ENCODE measurements at regions of chr3 and their contacts with region 1.

Region 1: DNA sequence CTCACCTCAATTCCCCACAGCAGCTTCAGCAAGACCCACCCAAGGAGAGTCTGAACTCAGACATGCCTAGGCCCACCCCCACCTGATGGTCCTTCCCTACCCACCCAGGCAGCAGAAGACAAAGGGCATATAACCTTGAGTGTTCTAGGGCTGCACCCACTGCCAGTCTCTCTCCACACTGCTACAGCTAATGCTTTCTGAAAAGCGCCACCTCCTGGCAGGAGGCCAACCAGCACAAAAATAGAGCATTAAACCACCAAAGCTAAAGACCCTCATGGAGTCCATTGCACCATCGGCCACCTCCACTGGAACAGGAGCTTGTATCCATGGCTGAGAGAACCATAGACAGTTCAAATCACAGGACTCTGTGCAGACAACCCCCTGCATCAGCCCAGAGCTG is 11.3 kb upstream of the RPL39L start:
- DNase-seq: peak; percentile 81
- H3K4me3 Mint-ChIP-seq: no peak overlapping the region
- H3K27ac Mint-ChIP-seq: no peak overlapping the region
- H3K4me1 Mint-ChIP-seq: no peaks in the 10 kb centered on the region
- H3K27me3 Mint-ChIP-seq: peaks cover 6% of the 10 kb centered on the region

Region 2: GRCh38 chr3:187101184-187102072 is 49.2 kb before region 1 on chr3:
- CTCF ChIA-PET with region 1: interaction called, 15 read pairs
- POLR2A ChIA-PET with region 1: no interaction called
- intact Hi-C with region 1: no loop called
- DNase-seq: peak; percentile 68
- H3K4me3 Mint-ChIP-seq: peak overlapping the region; percentile 20
- H3K27ac Mint-ChIP-seq: peak overlapping the region; percentile 28
- H3K4me1 Mint-ChIP-seq: peaks cover 30% of the 10 kb centered on the region
- H3K27me3 Mint-ChIP-seq: no peaks in the 10 kb centered on the region

Region 3: GRCh38 chr3:187112934-187113793 is 37.4 kb before region 1 on chr3:
- CTCF ChIA-PET with region 1: interaction called, 174 read pairs
- POLR2A ChIA-PET with region 1: no interaction called
- intact Hi-C with region 1: loop called (anchors 1 kb)
- DNase-seq: no peak
- H3K4me3 Mint-ChIP-seq: no peak overlapping the region
- H3K27ac Mint-ChIP-seq: peak overlapping the region; percentile 44
- H3K4me1 Mint-ChIP-seq: peaks cover 7% of the 10 kb centered on the region
- H3K27me3 Mint-ChIP-seq: no peaks in the 10 kb centered on the region

Region 4: DNA sequence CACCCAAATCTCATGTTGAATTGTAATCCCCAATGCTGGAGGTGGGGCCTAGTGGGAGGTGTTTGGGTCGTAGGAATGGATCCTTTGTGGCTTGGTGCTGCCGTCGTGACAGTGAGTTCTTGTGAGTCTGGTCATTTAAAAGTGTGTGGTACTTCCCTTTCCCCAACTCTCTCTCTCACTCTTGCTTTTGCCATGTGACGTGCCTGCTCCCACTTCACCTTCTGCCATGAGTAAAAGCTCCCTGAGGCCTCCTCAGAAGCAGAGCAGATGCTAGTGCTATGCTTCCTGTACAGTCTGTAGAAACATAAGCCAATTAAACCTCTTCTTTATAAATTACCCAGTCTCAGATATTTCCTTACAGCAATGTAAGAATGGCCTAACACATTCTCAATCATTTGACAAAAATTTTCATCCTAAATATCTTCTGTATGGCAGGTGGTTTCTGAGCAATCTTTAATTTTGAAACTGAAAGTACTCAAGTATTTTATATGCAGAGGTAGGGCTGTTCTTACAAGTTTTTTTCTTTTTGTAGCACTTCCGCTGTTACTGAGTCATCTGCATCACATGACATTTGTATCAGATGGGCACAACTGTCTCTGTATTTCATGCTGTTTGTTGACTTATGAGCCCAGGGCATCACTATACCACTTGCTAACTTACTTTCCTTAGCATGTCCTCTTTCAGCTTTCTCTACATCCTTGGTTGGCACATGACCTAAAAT is 20.1 kb before region 1 on chr3:
- CTCF ChIA-PET with region 1: interaction called, 19 read pairs
- POLR2A ChIA-PET with region 1: no interaction called
- intact Hi-C with region 1: no loop called
- DNase-seq: peak; percentile 71
- H3K4me3 Mint-ChIP-seq: peak overlapping the region; percentile 50
- H3K27ac Mint-ChIP-seq: peak overlapping the region; percentile 96
- H3K4me1 Mint-ChIP-seq: peaks cover 34% of the 10 kb centered on the region
- H3K27me3 Mint-ChIP-seq: no peaks in the 10 kb centered on the region

Region 5: GRCh38 chr3:187164885-187165543 is 14.4 kb after region 1 on chr3:
- CTCF ChIA-PET with region 1: interaction called, 31 read pairs
- POLR2A ChIA-PET with region 1: interaction called, 4 read pairs
- intact Hi-C with region 1: no loop called
- DNase-seq: peak; percentile 20
- H3K4me3 Mint-ChIP-seq: no peak overlapping the region
- H3K27ac Mint-ChIP-seq: no peak overlapping the region
- H3K4me1 Mint-ChIP-seq: peaks cover 1% of the 10 kb centered on the region
- H3K27me3 Mint-ChIP-seq: peaks cover 3% of the 10 kb centered on the region

Measured in activated CD4-positive, alpha-beta memory T cell treated with anti-CD3 and anti-CD28 coated beads for 36 hours (primary cell).